ENCODE measurements at regions of chr1 and their contacts with region 1.

Region 1: GRCh38 chr1:958823-959729 is at the start of gene NOC2L:
- DNase-seq: peak; percentile 90 to 93 (median 92)
- H3K4me3 ChIP-seq: peak within 1 kb of the TSS; percentile 83 to 99
- H3K4me3 Mint-ChIP-seq: peak within 1 kb of the TSS; percentile 89 to 96 (median 91)
- H3K27ac ChIP-seq: peak within 1 kb of the TSS; percentile 65
- H3K27ac Mint-ChIP-seq: peak within 1 kb of the TSS; percentile 75 to 93 (median 86)
- H3K4me1 ChIP-seq: peaks cover 23% of the 10 kb centered on the region
- H3K4me1 Mint-ChIP-seq: peaks cover 7 to 34% (median 18%) of the 10 kb centered on the region in 4 donors
- H3K27me3 ChIP-seq: no peaks in the 10 kb centered on the region
- H3K27me3 Mint-ChIP-seq: no peaks in the 10 kb centered on the region
- total RNA-seq, gene NOC2L: 63.6 to 69.5 TPM

Region 2: DNA sequence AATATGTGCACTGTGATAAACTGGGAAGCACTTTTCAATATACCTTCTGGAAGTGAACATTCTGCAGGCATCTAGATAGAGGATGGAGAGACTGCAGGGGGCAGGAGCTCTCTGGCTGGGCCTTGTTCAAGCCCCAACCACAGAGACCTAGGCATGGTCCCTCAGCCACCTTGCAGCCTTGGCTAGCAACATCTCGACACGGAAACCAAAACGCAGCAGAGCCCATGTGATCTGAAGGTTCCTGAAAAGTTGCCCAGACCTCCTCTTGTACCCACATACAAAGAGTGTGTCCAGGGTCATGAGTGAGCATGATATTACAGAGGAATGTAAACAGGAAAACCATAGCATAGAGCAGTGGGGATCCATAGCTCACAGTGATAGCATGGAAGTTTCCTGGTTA is 68.4 kb before region 1 on chr1:
- CTCF ChIA-PET with region 1: no interaction called
- POLR2A ChIA-PET with region 1: no interaction called
- intact Hi-C with region 1: no loop called
- DNase-seq: no peak
- H3K4me3 ChIP-seq: no peak overlapping the region
- H3K4me3 Mint-ChIP-seq: peak overlapping the region in 1 of 8 donors; percentile 8
- H3K27ac ChIP-seq: no peak overlapping the region
- H3K27ac Mint-ChIP-seq: no peak overlapping the region
- H3K4me1 ChIP-seq: no peaks in the 10 kb centered on the region
- H3K4me1 Mint-ChIP-seq: peaks cover 0 to 3% (median 0%) of the 10 kb centered on the region in 4 donors
- H3K27me3 ChIP-seq: peaks cover 3% of the 10 kb centered on the region
- H3K27me3 Mint-ChIP-seq: peaks cover 19 to 29% of the 10 kb centered on the region in 2 donors

Region 3: DNA sequence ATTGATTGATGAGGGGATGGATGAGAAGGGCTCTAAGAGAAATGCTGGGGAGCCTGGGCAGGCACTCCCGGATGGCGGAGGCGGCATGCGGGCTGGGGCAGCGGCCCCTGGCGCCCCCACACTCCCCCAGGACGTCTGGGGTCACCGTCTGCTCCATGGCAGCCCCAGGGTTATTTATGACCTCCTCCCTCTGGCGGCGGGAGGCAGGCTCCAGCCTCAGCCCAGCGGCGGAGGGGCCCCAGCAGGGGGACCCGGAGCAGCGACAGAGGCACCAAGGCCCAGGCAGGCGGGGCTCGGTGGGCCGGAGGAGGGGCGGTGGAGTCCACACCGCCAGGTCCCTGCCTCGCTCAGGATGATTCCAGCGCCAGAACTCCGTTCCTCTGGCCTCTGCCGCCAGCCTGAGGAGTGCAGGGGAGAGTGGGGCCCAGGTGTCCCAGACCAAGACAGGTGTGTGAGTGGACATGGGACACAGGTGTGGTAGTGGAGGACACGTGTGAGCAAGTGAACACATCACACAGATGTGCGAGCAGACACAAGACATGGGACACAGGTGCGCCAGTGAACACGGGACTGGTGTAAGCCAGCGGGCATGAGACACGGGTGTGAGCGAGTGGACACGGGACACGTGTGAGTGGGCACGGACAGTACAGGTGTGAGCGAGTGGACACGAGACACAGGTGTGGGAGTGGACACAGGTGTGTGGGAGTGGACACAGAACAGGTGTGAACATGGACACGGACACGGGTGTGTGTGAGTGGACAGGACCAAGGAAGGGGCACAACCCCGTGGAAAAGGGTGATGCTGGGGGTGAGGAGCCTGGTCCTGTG is 37.9 kb before region 1 on chr1:
- CTCF ChIA-PET with region 1: no interaction called
- POLR2A ChIA-PET with region 1: no interaction called
- intact Hi-C with region 1: loop called (anchors 5 kb)
- DNase-seq: peak in 1 of 5 donors; percentile 29
- H3K4me3 ChIP-seq: no peak overlapping the region
- H3K4me3 Mint-ChIP-seq: peak overlapping the region in 7 of 8 donors; percentile 14 to 47 (median 39)
- H3K27ac ChIP-seq: no peak overlapping the region
- H3K27ac Mint-ChIP-seq: peak overlapping the region in 2 of 7 donors; percentile 22 to 90
- H3K4me1 ChIP-seq: peaks cover 32% of the 10 kb centered on the region
- H3K4me1 Mint-ChIP-seq: peaks cover 11 to 29% (median 18%) of the 10 kb centered on the region in 4 donors
- H3K27me3 ChIP-seq: peaks cover 34% of the 10 kb centered on the region
- H3K27me3 Mint-ChIP-seq: peaks cover 26 to 30% of the 10 kb centered on the region in 2 donors

Region 4: DNA sequence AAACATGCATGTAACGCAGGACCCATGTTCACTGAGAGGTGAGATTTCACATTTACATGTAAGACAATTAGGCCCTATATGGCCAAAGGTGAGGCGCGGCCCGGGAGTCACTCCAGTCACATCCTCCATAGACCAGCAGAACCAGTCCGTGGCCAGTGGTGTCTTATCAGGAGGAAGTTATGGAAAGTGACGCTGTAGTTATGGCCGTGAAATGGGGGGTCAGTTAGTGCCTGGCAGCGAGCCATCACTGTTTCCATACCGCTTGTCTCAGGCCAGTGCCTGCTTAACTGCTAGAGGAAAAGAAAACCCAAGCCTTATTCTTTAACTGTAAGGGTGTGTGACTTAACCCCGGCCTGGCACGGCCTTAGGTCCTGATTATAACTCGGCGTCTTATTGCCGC is 150.7 kb after region 1 on chr1:
- CTCF ChIA-PET with region 1: no interaction called
- POLR2A ChIA-PET with region 1: no interaction called
- intact Hi-C with region 1: no loop called
- DNase-seq: no peak
- H3K4me3 ChIP-seq: no peak overlapping the region
- H3K4me3 Mint-ChIP-seq: no peak overlapping the region
- H3K27ac ChIP-seq: no peak overlapping the region
- H3K27ac Mint-ChIP-seq: no peak overlapping the region
- H3K4me1 ChIP-seq: peaks cover 3% of the 10 kb centered on the region
- H3K4me1 Mint-ChIP-seq: peaks cover 4 to 26% (median 12%) of the 10 kb centered on the region in 4 donors
- H3K27me3 ChIP-seq: no peaks in the 10 kb centered on the region
- H3K27me3 Mint-ChIP-seq: no peaks in the 10 kb centered on the region